ENCODE measurements at regions of chr15 and their contacts with region 1.

Region 1: GRCh38 chr15:51192521-51193280 is 98.0 kb upstream of the TNFAIP8L3 start:
- DNase-seq: peak; percentile 80 to 98 (median 96)

Region 2: DNA sequence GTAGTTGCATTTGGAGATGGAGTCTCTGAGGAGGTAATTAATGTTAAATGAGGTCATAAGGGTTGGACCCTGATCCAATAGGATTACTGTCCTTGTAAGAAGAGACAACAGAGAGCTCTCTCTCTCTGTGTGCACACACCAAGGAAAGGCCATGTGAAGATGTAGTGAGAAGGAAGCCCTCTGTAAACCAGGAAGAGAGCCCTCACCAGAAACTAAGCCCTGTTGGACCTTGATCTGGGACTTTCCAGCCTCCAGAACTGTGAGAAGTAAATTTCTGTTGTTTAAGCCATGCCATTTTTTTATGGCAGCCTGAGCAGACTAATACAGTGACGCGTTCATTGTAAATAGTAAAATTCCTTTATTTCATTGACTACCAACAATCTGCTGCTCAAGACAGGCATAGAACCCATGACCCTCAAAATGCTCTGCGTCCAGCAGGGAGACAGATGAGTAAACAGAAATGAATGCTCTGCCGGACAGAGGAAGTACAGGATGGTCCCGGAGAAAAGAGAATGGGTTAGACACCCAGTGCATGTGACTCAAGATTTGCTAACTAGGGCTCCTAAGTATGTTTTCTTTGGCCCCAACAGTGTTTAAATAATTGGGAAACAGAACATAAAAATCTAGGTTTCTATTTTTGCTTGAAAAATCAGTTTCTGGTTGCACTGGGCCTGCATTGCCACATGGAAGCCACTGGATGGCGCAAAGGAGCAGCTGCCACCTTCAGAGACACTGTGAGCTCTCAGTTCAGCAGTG is 60.1 kb before region 1 on chr15:
- intact Hi-C with region 1: loop called (anchors 2 kb)
- DNase-seq: peak in 41 of 42 donors; percentile 19 to 84 (median 67)

Region 3: GRCh38 chr15:51162865-51163762 is 29.6 kb before region 1 on chr15:
- intact Hi-C with region 1: loop called (anchors 2 kb)
- DNase-seq: peak; percentile 59 to 96 (median 85)

Measured in head of caudate nucleus (tissue), 42 donors.